CD8-positive, alpha-beta memory T cell (primary cell): ENCODE measurements at regions of chr18 and their contacts with region 1.

Region 1: GRCh38 chr18:77054606-77055428 is 77.8 kb downstream of the MBP start:
- DNase-seq: peak; percentile 63 to 87 (median 80)
- H3K4me3 ChIP-seq: peak overlapping the region; percentile 50
- H3K4me3 Mint-ChIP-seq: peak overlapping the region; percentile 70 to 89 (median 82)
- H3K27ac ChIP-seq: peak overlapping the region; percentile 71
- H3K27ac Mint-ChIP-seq: peak overlapping the region; percentile 83 to 98 (median 94)
- H3K4me1 ChIP-seq: peaks cover 77% of the 10 kb centered on the region
- H3K4me1 Mint-ChIP-seq: peaks cover 66 to 79% (median 71%) of the 10 kb centered on the region in 3 donors
- H3K27me3 ChIP-seq: no peaks in the 10 kb centered on the region
- H3K27me3 Mint-ChIP-seq: no peaks in the 10 kb centered on the region

Region 2: DNA sequence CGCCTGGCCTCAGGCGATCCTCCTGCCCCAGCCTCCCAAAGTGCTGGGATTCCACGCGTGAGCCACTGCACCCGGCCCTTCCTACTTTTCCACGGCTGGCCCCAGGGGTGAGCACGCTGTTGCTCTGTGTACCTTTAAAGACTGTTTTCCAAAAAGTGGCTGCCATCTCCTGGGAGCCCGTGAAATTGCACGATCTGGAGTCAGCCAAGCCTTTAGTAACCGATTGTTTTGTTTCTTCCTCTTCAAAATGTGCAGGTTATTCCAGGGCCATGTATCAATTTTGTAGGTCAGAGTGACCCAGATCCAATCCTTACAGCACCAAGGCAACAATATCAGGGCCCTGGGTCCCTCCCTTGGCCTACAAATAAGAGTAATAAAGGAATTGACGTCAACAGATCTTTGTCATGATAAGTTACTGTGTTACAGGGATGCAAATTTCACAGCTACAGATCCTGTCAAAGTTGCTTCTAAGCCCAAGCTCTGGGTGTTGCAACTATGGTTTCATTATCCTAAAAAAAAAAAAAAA is 368.0 kb before region 1 on chr18:
- CTCF ChIA-PET with region 1: no interaction called
- POLR2A ChIA-PET with region 1: no interaction called
- DNase-seq: peak in 1 of 5 donors; percentile 13
- H3K4me3 ChIP-seq: no peak overlapping the region
- H3K4me3 Mint-ChIP-seq: peak overlapping the region in 2 of 7 donors; percentile 13 to 14
- H3K27ac ChIP-seq: no peak overlapping the region
- H3K27ac Mint-ChIP-seq: peak overlapping the region in 4 of 8 donors; percentile 38 to 78 (median 72)
- H3K4me1 ChIP-seq: no peaks in the 10 kb centered on the region
- H3K4me1 Mint-ChIP-seq: peaks cover 8 to 17% (median 13%) of the 10 kb centered on the region in 3 donors
- H3K27me3 ChIP-seq: no peaks in the 10 kb centered on the region
- H3K27me3 Mint-ChIP-seq: peaks cover 21 to 46% of the 10 kb centered on the region in 2 donors

Region 3: DNA sequence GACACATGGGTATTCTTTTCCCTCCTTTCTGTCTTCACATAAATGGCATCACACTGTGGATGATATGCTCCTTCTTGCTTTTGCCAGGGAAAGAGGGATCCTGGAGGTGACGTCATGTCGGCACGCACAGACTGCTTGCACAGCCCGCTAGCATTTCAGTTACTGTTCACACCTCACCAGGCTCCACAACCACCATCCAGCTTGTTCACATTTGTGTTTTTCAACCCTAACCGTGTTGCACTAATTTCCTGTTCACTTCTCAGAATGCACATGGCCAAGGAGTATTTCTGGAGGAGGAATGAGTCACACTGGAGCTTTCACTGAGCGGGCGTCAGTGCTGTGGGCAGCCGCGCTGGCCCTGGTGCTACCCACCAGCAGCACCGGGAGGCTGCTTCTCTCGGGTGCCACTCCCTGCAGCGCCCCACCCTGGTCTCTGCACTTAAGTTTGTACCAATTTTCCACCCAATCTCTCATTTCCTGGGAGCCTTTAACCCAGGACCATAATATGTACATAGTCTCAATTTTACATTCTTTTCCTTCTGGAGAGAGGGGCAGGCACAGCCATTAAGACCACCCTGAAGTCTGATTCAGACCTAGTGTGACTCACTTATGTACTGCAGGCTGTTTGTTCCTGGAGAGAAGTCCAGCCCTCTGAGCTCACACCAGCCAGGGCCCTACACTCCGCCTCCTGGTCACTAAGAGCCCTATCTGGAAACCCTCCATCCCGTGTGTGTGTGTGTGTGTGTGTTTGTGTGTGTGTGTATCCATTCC is 12.7 kb after region 1 on chr18:
- CTCF ChIA-PET with region 1: interaction called, 38 read pairs
- POLR2A ChIA-PET with region 1: interaction called, 10 read pairs
- DNase-seq: peak in 4 of 5 donors; percentile 53 to 80 (median 63)
- H3K4me3 ChIP-seq: peak overlapping the region; percentile 27
- H3K4me3 Mint-ChIP-seq: peak overlapping the region; percentile 71 to 87 (median 79)
- H3K27ac ChIP-seq: peak overlapping the region; percentile 62
- H3K27ac Mint-ChIP-seq: peak overlapping the region; percentile 93 to 98 (median 97)
- H3K4me1 ChIP-seq: peaks cover 100% of the 10 kb centered on the region
- H3K4me1 Mint-ChIP-seq: peaks cover 99 to 100% (median 100%) of the 10 kb centered on the region in 3 donors
- H3K27me3 ChIP-seq: no peaks in the 10 kb centered on the region
- H3K27me3 Mint-ChIP-seq: peaks cover 0 to 2% of the 10 kb centered on the region in 2 donors

Region 4: DNA sequence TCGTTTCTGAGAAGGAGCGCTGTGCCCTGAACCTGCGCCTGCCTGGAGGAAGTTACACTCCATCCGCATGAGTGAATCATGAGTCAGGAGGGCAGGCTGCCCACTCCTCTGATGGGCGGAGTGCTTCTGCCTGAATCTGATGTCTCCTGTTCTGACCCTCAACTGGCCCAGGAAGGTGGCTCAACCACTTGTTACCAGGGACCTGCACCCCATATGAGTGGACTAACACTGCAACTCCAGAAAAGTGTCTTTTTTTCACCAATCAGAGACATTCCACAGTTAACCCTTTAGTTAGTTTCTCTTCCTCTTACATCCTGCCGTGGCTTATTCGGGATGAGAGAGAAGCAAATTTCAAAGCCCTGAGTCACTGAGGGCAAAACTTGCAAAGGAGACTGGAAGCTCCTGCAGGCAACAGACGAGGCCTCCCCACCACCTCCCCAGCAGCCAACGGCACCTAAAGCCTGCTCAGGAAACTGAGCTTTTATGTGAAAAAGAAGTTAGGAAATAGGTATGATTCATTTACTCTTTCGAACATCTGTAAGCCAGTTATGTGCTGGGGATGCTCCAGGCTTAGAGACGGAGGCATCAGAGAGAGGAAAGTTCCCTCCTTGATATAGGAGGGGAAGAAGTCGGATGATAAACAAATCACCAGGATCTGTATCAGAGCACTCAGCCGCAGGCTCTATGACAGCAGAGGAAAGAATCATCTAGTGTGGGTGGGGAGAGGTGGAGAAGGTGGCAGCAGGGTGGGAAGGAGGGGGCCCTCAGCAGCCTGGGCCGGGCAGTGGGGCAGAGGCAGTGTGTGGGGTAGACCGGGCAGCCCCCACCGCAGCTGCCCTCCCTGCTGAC is 46.8 kb after region 1 on chr18:
- CTCF ChIA-PET with region 1: interaction called, 13 read pairs
- POLR2A ChIA-PET with region 1: interaction called, 3 read pairs
- DNase-seq: peak in 4 of 5 donors; percentile 23 to 63 (median 38)
- H3K4me3 ChIP-seq: peak overlapping the region; percentile 42
- H3K4me3 Mint-ChIP-seq: peak overlapping the region; percentile 73 to 87 (median 80)
- H3K27ac ChIP-seq: peak overlapping the region; percentile 55
- H3K27ac Mint-ChIP-seq: peak overlapping the region; percentile 93 to 98 (median 96)
- H3K4me1 ChIP-seq: peaks cover 99% of the 10 kb centered on the region
- H3K4me1 Mint-ChIP-seq: peaks cover 90 to 100% (median 100%) of the 10 kb centered on the region in 3 donors
- H3K27me3 ChIP-seq: no peaks in the 10 kb centered on the region
- H3K27me3 Mint-ChIP-seq: no peaks in the 10 kb centered on the region

Region 5: GRCh38 chr18:77108001-77108692 is 53.3 kb after region 1 on chr18:
- CTCF ChIA-PET with region 1: interaction called, 10 read pairs
- POLR2A ChIA-PET with region 1: interaction called, 4 read pairs
- DNase-seq: no peak
- H3K4me3 ChIP-seq: no peak overlapping the region
- H3K4me3 Mint-ChIP-seq: peak overlapping the region; percentile 26 to 74 (median 69)
- H3K27ac ChIP-seq: no peak overlapping the region
- H3K27ac Mint-ChIP-seq: peak overlapping the region; percentile 82 to 98 (median 96)
- H3K4me1 ChIP-seq: peaks cover 63% of the 10 kb centered on the region
- H3K4me1 Mint-ChIP-seq: peaks cover 90 to 99% (median 98%) of the 10 kb centered on the region in 3 donors
- H3K27me3 ChIP-seq: no peaks in the 10 kb centered on the region
- H3K27me3 Mint-ChIP-seq: no peaks in the 10 kb centered on the region

Region 6: DNA sequence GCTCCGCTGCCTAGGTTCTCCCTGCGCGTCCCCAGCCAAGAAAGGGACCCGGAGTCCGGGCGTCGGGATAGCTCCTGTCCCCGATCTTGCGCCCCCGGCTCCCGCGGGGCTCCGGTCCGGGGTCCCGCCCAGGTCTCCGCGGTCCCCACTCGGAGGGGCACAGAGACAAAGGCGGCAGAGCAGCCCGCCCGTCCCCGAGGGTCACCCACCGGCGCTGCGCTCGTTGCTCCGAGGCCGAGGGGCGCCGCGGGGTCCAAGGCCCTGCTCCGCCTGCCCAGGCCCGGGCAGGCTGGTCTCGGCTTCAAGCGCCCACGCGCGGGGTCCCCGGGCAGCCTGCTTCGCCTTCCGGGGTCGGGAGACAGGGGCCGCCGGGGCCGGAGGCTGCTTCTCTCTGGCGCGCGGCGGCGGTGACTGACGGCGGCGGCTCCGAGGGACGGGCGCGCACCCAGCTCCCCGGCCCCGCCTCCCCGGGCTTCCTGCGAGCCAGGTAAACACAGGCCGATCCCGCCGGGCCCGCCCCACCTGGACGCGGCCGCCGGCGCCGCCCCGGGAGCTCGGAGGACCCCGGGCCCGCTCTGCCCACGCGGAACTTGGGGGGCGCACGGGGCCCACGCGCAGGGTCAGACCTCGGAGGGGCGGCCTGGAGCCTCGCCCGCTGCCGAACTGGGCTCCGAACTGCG is 77.7 kb after region 1 on chr18 and contains the start of gene MBP:
- CTCF ChIA-PET with region 1: interaction called, 13 read pairs
- POLR2A ChIA-PET with region 1: interaction called, 5 read pairs
- DNase-seq: peak; percentile 59 to 77 (median 66)
- H3K4me3 ChIP-seq: peak within 1 kb of the TSS; percentile 75
- H3K4me3 Mint-ChIP-seq: peak within 1 kb of the TSS; percentile 97 to 100 (median 98)
- H3K27ac ChIP-seq: peak within 1 kb of the TSS; percentile 71
- H3K27ac Mint-ChIP-seq: peak within 1 kb of the TSS; percentile 82 to 98 (median 96)
- H3K4me1 ChIP-seq: peaks cover 44% of the 10 kb centered on the region
- H3K4me1 Mint-ChIP-seq: peaks cover 49 to 53% (median 50%) of the 10 kb centered on the region in 3 donors
- H3K27me3 ChIP-seq: no peaks in the 10 kb centered on the region
- H3K27me3 Mint-ChIP-seq: no peaks in the 10 kb centered on the region
- total RNA-seq, gene MBP: 59.5 to 60.0 TPM

Region 7: GRCh38 chr18:77209587-77209986 is 154.8 kb after region 1 on chr18:
- CTCF ChIA-PET with region 1: interaction called, 10 read pairs
- POLR2A ChIA-PET with region 1: no interaction called
- DNase-seq: no peak
- H3K4me3 ChIP-seq: peak overlapping the region; percentile 56
- H3K4me3 Mint-ChIP-seq: peak overlapping the region; percentile 86 to 94 (median 92)
- H3K27ac ChIP-seq: no peak overlapping the region
- H3K27ac Mint-ChIP-seq: peak overlapping the region; percentile 89 to 97 (median 93)
- H3K4me1 ChIP-seq: peaks cover 38% of the 10 kb centered on the region
- H3K4me1 Mint-ChIP-seq: peaks cover 41 to 49% (median 47%) of the 10 kb centered on the region in 3 donors
- H3K27me3 ChIP-seq: no peaks in the 10 kb centered on the region
- H3K27me3 Mint-ChIP-seq: no peaks in the 10 kb centered on the region

Region 8: DNA sequence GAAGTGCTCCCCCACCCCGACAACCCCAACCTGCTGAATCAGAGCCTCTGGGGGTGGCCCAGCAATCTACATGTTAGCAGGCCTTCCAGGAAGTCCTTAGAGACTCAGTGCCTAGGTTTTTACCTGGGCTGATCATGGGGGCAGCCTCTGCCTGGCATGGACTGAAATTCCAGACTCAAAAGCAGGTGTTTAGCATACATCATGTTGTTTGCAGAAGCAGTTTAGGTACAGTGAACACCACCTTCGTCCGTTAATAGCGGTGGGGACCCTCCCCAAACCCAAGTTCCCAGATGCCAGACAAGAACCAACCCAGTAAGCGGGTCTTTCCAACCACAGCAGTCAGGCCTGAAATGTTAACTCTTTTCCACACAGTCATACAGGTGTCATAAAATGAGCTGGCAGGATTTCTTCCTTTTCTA is 168.4 kb after region 1 on chr18:
- CTCF ChIA-PET with region 1: no interaction called
- POLR2A ChIA-PET with region 1: no interaction called
- DNase-seq: no peak
- H3K4me3 ChIP-seq: no peak overlapping the region
- H3K4me3 Mint-ChIP-seq: no peak overlapping the region
- H3K27ac ChIP-seq: no peak overlapping the region
- H3K27ac Mint-ChIP-seq: peak overlapping the region in 1 of 8 donors; percentile 88
- H3K4me1 ChIP-seq: no peaks in the 10 kb centered on the region
- H3K4me1 Mint-ChIP-seq: peaks cover 18 to 23% (median 19%) of the 10 kb centered on the region in 3 donors
- H3K27me3 ChIP-seq: no peaks in the 10 kb centered on the region
- H3K27me3 Mint-ChIP-seq: peaks cover 3 to 9% of the 10 kb centered on the region in 2 donors